ENCODE measurements at regions of chr1 and their contacts with region 1.

Region 1: DNA sequence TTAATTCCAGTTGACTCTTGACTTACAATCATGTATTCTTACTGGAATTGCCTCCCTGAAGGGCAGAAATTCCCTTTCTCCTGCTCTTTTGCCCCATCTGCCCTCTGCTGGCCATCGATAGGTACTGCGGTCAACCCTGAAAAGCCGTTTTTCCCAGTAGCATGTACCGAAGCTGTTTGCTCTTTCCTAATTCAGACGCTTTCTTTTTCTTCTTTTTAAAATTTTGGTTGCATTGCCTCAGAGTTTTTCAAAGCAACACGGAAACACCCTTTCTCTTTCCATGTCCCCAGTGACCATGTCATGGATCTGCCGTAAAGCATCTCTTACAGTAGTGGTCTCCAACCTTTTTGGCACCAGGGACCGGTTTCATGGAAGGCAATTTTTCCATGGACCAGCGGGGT is 164.2 kb upstream of the C1orf21 start:
- DNase-seq: peak; percentile 64
- ATAC-seq: peak; percentile 57
- H3K4me3 ChIP-seq: peak overlapping the region; percentile 68
- H3K27ac ChIP-seq: no peak overlapping the region
- H3K4me1 ChIP-seq: no peaks in the 10 kb centered on the region
- H3K27me3 ChIP-seq: no peaks in the 10 kb centered on the region
- CTCF ChIP-seq: peak; percentile 81

Region 2: GRCh38 chr1:183655562-183656075 is 567.0 kb before region 1 on chr1:
- CTCF ChIA-PET with region 1: no interaction called
- POLR2A ChIA-PET with region 1: no interaction called
- intact Hi-C with region 1: loop called (anchors 5 kb)
- DNase-seq: peak; percentile 85
- ATAC-seq: peak; percentile 78
- H3K4me3 ChIP-seq: no peak overlapping the region
- H3K27ac ChIP-seq: no peak overlapping the region
- H3K4me1 ChIP-seq: no peaks in the 10 kb centered on the region
- H3K27me3 ChIP-seq: no peaks in the 10 kb centered on the region
- CTCF ChIP-seq: peak; percentile 79

Region 3: DNA sequence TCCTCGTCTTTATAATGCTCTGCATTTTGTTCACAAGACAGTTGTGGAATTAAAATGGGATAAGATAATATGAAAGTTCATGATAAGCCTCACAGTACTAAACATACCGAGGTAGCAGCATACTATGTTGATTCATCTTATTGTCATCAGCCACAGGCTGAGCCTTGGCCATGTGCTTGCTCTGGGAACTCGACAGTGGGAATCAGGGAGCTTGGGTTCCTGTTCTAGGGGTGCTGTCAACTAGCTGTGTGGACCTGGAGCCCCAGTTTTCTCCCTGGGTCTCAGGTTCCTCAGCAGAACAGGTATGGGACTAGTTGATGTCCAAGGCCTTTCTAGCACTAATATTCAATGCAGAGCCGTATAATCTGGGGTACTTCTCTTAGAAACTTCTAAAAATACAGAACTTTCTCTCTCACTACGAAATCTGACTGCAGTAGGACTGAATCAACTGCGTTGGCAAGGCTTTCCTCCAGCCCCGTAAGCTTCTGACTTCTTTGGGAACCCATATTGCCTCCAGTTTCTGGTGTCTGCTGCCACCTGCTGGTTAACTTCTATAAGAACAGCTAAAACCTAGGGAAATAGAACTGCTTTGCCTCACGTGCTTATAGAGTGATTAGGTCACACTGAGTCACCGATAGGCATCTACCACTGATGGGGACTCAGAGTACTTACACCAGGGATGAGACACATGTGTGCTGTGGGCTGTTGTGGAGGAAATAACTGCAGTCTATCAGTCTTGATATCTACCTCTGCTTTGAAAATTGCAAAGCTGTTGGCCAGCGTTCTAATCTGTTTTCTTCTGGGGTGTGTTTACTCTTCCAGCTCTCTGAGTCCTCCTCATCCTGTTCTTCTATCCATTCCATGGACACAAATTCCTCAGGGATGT is 306.8 kb before region 1 on chr1:
- CTCF ChIA-PET with region 1: no interaction called
- POLR2A ChIA-PET with region 1: no interaction called
- intact Hi-C with region 1: loop called (anchors 2 kb)
- DNase-seq: peak; percentile 96
- ATAC-seq: peak; percentile 91
- H3K4me3 ChIP-seq: peak overlapping the region; percentile 45; the same call in 1 of the 2 replicates
- H3K27ac ChIP-seq: peak overlapping the region; percentile 86
- H3K4me1 ChIP-seq: peaks cover 13% of the 10 kb centered on the region
- H3K27me3 ChIP-seq: no peaks in the 10 kb centered on the region
- CTCF ChIP-seq: peak; percentile 78

Region 4: DNA sequence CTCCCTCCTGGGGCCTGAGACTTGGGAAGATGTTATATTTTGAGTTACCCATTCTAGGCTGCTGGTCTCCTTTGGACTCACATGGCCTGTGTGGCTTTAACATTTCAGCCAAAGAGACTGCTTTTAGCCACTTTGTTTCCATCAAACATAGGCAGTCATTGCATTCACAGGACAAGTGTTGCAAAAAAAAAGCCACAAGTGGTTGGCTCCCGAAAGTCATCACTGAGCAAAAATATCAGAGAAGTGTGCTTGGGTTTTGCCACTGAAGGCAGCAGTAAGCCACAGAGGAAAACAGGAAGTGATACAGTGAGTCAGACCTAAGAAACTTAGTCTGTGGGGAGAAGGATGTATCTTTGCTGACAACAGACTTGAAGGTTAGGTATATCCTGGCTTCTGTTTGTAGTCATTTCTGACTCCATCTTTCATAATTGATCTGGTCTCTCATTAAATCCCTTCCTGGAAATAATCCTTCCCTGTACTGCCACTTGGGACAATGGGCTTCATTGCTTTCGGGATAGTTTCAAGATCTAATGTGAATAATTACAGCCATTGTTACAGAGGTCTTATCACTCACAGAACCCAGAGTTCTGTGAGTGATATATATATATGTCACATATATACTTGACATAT is 266.0 kb before region 1 on chr1:
- CTCF ChIA-PET with region 1: no interaction called
- POLR2A ChIA-PET with region 1: no interaction called
- intact Hi-C with region 1: loop called (anchors 5 kb)
- DNase-seq: peak; percentile 64
- ATAC-seq: peak; percentile 87
- H3K4me3 ChIP-seq: no peak overlapping the region
- H3K27ac ChIP-seq: no peak overlapping the region; the same call in 1 of the 2 replicates
- H3K4me1 ChIP-seq: peaks cover 10% of the 10 kb centered on the region
- H3K27me3 ChIP-seq: no peaks in the 10 kb centered on the region
- CTCF ChIP-seq: peak; percentile 47; the same call in 1 of the 2 replicates

Region 5: DNA sequence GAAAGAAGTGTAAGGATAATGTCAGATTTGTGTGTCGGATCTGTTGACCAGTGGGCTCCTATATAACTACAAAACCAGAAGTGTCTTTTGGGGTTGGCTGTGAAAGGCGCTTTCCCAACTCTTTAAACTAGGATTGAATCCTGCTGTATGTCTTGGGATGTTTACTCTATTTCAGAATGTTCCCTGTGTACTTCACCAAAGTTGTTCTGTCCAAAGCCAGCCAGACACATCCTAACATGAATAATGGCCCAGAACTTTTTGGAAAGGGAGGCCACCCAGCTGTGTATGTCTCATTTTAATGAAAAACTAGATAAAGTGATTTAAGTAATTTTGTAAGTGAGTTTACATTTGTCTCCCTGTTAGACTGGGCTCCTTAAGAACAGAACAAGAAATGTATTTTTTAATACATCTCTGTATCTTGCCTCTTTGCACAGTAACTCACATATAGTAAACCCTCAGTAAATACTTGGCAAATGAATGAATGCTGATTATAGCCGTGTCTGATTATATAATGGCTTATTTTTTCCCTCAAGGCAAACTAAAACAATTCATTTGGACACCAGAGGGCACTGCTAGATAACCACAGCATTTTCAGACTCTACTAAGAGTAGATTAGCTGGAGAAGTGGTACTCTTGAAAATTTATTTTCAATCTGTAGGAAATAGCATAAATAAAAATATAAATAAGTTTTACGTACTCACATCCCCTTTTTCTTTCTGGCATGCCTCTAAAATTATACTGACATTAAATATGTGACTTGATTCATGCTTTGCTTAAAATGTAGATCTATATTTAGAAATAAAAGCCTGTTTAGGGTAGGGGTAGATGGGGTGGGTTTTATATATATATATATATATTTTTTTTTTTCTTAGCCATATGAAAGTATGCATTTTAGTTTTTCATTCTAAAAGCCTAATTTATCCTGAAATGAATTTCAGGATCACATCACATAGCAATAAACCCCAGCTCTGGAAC is 147.3 kb before region 1 on chr1:
- CTCF ChIA-PET with region 1: no interaction called
- POLR2A ChIA-PET with region 1: no interaction called
- intact Hi-C with region 1: loop called (anchors 1 kb)
- DNase-seq: peak; percentile 70
- ATAC-seq: peak; percentile 67
- H3K4me3 ChIP-seq: no peak overlapping the region
- H3K27ac ChIP-seq: no peak overlapping the region
- H3K4me1 ChIP-seq: no peaks in the 10 kb centered on the region
- H3K27me3 ChIP-seq: no peaks in the 10 kb centered on the region
- CTCF ChIP-seq: peak; percentile 70

Region 6: DNA sequence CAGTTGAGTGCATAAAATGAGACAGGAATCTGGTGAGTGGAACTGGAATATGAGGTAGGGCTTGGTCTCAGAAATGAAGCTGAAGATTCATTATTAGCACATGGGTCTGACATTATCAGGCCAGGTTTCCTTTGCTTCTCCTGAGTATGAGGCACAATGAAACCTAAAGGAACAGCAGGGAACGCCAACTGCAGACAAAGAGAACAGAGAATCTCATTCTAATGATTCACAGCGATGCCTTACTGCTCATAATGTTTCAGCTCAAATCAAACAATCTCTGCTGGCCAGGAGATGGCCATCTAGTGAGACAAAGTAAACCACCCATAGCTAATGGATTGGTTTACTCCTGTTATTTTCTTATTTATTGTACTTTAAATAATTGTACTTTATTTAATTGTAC is 297.7 kb after region 1 on chr1:
- CTCF ChIA-PET with region 1: no interaction called
- POLR2A ChIA-PET with region 1: no interaction called
- intact Hi-C with region 1: no loop called
- DNase-seq: no peak
- ATAC-seq: no peak
- H3K4me3 ChIP-seq: no peak overlapping the region
- H3K27ac ChIP-seq: no peak overlapping the region
- H3K4me1 ChIP-seq: no peaks in the 10 kb centered on the region
- H3K27me3 ChIP-seq: no peaks in the 10 kb centered on the region
- CTCF ChIP-seq: no peak